Motor neuron (in vitro differentiated cells): ENCODE measurements at regions of chr15 and their contacts with region 1.

Region 1: GRCh38 chr15:52735231-52736089 is 54.7 kb downstream of the ONECUT1 start:
- ATAC-seq: peak; percentile 64 to 89 (median 76)
- H3K4me3 ChIP-seq: no peak overlapping the region
- H3K27ac ChIP-seq: no peak overlapping the region
- H3K4me1 ChIP-seq: peaks cover 0 to 3% of the 10 kb centered on the region in 2 donors

Region 2: GRCh38 chr15:52227456-52227855 is 508.0 kb before region 1 on chr15:
- in situ Hi-C with region 1: loop called in 1 of 9 experiments (anchors 25 kb)
- ATAC-seq: peak; percentile 85 to 98 (median 96)
- H3K4me3 ChIP-seq: no peak overlapping the region
- H3K27ac ChIP-seq: no peak overlapping the region
- H3K4me1 ChIP-seq: no peaks in the 10 kb centered on the region

Region 3: DNA sequence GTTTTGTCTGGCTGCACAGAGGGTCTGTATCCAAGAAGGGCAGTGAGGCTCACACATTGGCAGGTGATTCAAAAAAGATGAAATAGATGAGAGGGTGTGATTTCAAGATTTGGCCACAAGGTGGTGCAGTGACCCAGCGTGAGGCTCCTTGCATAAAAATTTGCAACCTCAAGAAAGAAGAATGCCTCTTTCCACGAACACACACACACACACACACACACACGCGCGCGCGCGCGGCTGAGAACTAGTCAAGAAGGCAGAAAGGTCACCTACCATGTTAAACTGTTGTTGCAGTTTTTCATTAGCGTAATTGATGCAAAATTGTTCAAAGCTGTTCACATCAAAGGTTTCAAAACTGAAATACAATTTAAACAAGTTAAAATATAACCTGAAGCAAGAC is 479.1 kb before region 1 on chr15:
- in situ Hi-C with region 1: loop called in 4 of 9 experiments (anchors 10 to 25 kb)
- ATAC-seq: peak in 6 of 8 experiments; percentile 33 to 75 (median 54)
- H3K4me3 ChIP-seq: no peak overlapping the region
- H3K27ac ChIP-seq: no peak overlapping the region
- H3K4me1 ChIP-seq: peaks cover 13 to 22% of the 10 kb centered on the region in 2 donors

Region 4: DNA sequence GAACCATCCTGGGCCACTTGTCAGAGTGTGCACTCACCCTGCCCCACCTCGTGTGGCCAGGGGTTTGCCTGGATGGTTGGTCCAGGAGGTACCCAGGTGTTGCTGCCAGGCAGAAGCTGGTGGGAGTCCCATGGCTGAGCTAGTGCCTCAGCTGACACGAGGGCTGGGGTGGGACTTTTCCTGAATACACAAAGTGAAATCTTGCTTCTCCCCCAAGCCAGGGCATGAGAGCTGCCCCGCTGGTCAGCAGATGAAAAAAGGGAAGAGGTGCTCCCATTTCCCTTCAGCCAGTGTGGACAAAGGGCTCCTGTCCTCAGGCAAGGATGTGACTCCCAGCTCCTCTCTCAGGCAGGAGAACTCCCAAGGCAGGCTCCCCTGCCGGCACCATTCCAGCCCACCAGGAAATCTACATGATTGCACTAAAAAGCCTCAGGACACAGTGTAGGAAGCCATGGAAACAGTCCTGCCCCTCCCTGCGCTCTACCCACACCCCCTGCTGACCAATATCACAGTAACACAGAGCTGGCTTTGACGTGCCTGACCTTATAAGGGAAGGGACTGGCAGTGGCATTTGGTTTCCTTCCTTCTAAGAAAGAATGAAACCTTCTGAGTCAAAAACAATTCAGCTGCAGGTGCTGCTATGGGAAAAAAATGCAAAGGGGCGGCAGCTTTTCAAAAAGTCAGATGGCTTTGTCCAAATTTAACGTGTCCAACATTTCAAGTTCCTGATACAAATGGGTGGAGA is 473.8 kb before region 1 on chr15:
- in situ Hi-C with region 1: loop called in 4 of 9 experiments (anchors 10 to 25 kb)
- ATAC-seq: peak; percentile 91 to 99 (median 97)
- H3K4me3 ChIP-seq: no peak overlapping the region
- H3K27ac ChIP-seq: peak overlapping the region in 1 of 2 donors; percentile 23
- H3K4me1 ChIP-seq: peaks cover 25 to 27% of the 10 kb centered on the region in 2 donors

Region 5: GRCh38 chr15:52528991-52529926 is 206.2 kb before region 1 on chr15:
- in situ Hi-C with region 1: no loop called
- ATAC-seq: peak in 7 of 8 experiments; percentile 50 to 89 (median 81)
- H3K4me3 ChIP-seq: peak overlapping the region; percentile 66 to 84 (median 80)
- H3K27ac ChIP-seq: peak overlapping the region; percentile 86 to 92
- H3K4me1 ChIP-seq: peaks cover 2 to 8% of the 10 kb centered on the region in 2 donors

Region 6: DNA sequence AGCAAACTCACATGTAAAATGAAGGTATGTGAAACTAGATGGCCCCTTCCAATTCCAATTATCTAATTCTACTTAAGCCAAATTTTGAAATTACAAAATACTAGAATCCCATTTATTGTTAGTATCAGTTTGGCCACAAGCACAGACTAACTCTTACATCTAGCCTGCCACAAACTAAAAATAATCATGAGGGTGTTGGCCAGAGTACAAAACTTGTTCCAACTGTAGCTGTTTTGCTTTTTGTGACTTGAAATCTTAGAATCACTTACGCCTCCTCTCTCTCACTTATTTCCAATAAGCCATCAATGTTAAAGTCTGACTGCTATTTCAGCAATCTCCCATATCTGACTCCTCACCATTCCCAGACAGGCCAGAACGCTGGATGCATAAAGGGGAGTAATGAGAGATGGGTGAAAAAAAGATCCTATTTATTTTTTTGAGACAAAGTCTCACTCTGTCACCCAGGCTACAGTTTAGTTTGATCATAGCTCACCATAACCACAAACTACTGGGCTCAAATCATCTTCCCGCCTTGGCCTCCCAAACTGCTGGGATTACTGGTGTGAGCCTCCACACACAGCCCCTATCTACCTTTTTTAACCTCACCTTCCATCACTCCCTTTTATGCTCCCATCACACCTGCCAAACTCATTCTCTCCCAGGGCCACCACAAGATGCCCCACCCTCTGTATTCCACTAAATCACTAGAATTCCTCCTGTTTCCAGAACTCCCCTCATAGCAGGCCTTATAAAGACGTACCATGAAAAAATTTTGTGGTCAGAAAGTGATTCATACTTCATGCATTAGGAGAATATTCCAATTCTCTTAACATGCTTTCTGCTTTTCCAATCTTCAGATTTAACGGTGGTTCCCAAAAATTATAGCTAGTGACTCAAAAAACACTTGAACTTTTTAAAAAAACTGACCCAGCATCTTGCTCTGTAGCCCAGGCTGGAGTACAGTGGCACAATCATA is 92.8 kb before region 1 on chr15:
- in situ Hi-C with region 1: loop called in 1 of 9 experiments (anchors 25 kb)
- ATAC-seq: peak in 2 of 8 experiments; percentile 68 to 69
- H3K4me3 ChIP-seq: no peak overlapping the region
- H3K27ac ChIP-seq: no peak overlapping the region
- H3K4me1 ChIP-seq: no peaks in the 10 kb centered on the region